ENCODE measurements at regions of chr6 and their contacts with region 1.

Region 1: DNA sequence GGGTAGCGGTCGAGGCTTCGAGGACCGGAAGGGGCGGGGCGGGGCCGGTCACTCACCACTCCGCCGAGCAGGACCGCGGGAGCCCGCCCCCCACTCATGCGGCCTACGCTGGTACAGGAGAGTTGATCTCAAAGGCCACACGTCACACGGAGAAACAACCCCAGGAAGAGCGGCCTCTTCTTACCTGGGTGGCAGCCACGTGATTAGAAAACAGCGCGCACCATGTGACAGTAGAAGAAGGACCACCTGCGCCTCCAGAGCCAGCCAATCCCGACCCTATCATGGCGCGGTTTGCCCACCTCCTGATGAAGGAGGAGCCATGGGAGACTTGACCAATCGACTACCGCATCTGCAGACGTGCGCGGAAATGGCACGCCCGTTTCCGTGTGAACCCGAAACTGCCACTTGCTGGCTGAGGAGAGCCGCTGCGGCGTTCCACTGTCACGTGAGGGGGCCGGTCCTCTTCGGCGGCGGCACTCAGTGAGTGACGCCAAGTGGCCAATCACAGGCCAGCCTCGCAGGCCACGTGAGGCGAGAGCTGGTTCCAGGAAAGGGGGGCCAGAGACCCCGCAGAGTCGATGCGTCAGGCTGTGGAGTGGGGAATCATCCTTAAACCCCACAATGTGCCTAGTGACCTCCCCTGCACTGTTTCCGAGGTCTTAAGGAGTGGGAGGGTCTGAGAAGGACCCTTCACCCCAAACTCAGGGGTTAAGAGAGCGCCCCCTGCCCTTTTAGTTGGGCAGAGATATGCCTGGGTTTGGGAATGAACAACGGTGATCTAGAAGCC is at the start of gene CUTA:
- DNase-seq: peak; percentile 100
- H3K4me3 ChIP-seq: peak within 1 kb of the TSS; percentile 59 to 76 (median 62)
- H3K27ac ChIP-seq: peak within 1 kb of the TSS; percentile 93 to 97 (median 96)
- H3K4me1 ChIP-seq: peaks cover 0 to 48% (median 42%) of the 10 kb centered on the region in 4 donors
- H3K27me3 ChIP-seq: no peaks in the 10 kb centered on the region
- CTCF ChIP-seq: peak in 1 of 4 experiments; percentile 23
- EP300 ChIP-seq: peak in 1 of 4 donors; percentile 84
- POLR2A ChIP-seq: peak; percentile 80 to 89
- total RNA-seq, gene CUTA: 102 to 148 (median 120) TPM

Region 2: GRCh38 chr6:32971581-32972352 is 446.3 kb before region 1 on chr6:
- intact Hi-C with region 1: loop called (anchors 5 kb)
- DNase-seq: peak; percentile 100
- H3K4me3 ChIP-seq: peak overlapping the region; percentile 71 to 87 (median 83)
- H3K27ac ChIP-seq: peak overlapping the region; percentile 98 to 99 (median 98)
- H3K4me1 ChIP-seq: peaks cover 0 to 41% (median 35%) of the 10 kb centered on the region in 4 donors
- H3K27me3 ChIP-seq: no peaks in the 10 kb centered on the region
- CTCF ChIP-seq: no peak
- EP300 ChIP-seq: peak in 2 of 4 donors; percentile 48 to 82
- POLR2A ChIP-seq: peak; percentile 99

Measured in sigmoid colon (tissue), 7 donors.